ENCODE measurements at regions of chrX and their contacts with region 1.

Region 1: GRCh38 chrX:19887911-19888879 is 795 bp upstream of the SH3KBP1 start:
- DNase-seq: peak; percentile 46
- H3K4me3 ChIP-seq: peak overlapping the region; percentile 59 to 63
- H3K27ac ChIP-seq: peak overlapping the region; percentile 59 to 68
- H3K4me1 ChIP-seq: no peaks in the 10 kb centered on the region
- H3K27me3 ChIP-seq: no peaks in the 10 kb centered on the region
- CTCF ChIP-seq: peak in 2 of 3 experiments; percentile 59 to 70
- POLR2A ChIP-seq: no peak

Region 2: DNA sequence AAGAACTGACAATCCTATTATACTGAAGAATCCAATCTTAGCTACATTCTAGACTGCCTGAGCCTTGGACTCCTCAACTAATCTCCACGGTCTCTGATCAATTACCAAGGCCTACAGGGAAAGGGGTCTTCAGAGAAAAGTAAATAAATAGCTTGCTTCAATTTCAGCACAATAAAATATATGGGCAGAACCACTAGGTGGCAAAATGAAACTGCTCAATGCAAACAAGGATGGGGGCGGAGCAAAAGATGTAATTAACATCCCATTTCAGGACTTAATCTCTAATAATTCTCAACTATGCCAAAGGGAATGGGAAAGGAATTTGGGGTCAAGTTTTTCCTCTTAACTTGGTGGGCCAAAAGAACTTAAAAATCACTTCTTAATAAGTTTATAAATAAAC is 294.5 kb before region 1 on chrX:
- intact Hi-C with region 1: loop called (anchors 5 kb)
- DNase-seq: peak; percentile 35
- H3K4me3 ChIP-seq: no peak overlapping the region
- H3K27ac ChIP-seq: no peak overlapping the region
- H3K4me1 ChIP-seq: no peaks in the 10 kb centered on the region
- H3K27me3 ChIP-seq: no peaks in the 10 kb centered on the region
- CTCF ChIP-seq: peak; percentile 44 to 53 (median 50)
- POLR2A ChIP-seq: no peak

Region 3: GRCh38 chrX:19747652-19748610 is 140.3 kb before region 1 on chrX:
- intact Hi-C with region 1: loop called (anchors 5 kb)
- DNase-seq: no peak
- H3K4me3 ChIP-seq: no peak overlapping the region
- H3K27ac ChIP-seq: no peak overlapping the region
- H3K4me1 ChIP-seq: no peaks in the 10 kb centered on the region
- H3K27me3 ChIP-seq: no peaks in the 10 kb centered on the region
- CTCF ChIP-seq: no peak
- POLR2A ChIP-seq: no peak

Measured in testis (tissue), 5 donors.